ENCODE measurements at regions of chr17 and their contacts with region 1.

Region 1: DNA sequence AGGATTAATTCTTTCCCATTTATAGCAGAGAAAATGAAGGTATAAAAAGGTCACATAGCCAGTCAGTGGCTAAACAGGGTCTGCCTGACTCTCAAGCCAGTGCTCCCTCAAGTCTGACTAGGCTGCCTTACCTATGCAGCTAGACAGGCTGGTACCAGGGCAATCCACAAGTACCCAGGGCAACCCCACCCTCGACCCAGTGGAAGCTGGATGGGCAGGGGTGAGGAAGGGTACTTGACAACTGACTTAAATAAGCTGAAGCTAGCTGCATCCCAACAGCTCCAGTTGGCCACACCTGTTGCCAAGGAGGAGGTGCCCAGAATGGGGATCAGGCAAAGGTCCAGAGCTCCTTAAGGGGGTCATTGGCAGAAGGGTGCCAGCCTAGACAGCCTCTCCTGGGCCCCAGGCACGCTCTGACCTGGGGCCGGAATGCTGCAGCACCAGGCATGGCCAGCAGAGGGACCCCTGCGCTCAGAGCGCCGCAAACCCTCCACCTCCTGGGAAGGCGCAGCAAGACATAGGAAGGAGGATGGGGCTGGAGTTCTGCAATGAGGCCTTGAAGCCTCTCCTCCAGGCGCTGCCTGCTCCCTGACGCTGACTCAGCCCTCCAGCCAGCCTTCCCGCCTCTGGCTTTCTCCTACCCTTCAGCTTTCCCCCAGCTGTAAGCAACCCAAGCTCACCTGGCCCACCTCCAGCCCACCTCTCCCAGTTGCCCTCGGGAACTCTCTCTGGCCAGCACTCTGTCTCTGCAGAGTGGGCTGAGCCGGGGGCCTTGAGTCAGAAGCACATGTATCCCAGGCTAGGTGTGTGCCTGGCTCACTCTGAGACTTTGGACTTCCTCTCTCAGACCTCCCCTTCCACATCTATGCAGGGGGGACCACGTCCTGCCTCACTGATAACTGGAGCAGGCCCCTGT is 28.8 kb downstream of the MPP2 start:
- DNase-seq: peak; percentile 74
- H3K4me3 ChIP-seq: no peak overlapping the region
- H3K27ac ChIP-seq: no peak overlapping the region
- H3K27me3 ChIP-seq: peaks cover 18% of the 10 kb centered on the region
- CTCF ChIP-seq: peak; percentile 97

Region 2: DNA sequence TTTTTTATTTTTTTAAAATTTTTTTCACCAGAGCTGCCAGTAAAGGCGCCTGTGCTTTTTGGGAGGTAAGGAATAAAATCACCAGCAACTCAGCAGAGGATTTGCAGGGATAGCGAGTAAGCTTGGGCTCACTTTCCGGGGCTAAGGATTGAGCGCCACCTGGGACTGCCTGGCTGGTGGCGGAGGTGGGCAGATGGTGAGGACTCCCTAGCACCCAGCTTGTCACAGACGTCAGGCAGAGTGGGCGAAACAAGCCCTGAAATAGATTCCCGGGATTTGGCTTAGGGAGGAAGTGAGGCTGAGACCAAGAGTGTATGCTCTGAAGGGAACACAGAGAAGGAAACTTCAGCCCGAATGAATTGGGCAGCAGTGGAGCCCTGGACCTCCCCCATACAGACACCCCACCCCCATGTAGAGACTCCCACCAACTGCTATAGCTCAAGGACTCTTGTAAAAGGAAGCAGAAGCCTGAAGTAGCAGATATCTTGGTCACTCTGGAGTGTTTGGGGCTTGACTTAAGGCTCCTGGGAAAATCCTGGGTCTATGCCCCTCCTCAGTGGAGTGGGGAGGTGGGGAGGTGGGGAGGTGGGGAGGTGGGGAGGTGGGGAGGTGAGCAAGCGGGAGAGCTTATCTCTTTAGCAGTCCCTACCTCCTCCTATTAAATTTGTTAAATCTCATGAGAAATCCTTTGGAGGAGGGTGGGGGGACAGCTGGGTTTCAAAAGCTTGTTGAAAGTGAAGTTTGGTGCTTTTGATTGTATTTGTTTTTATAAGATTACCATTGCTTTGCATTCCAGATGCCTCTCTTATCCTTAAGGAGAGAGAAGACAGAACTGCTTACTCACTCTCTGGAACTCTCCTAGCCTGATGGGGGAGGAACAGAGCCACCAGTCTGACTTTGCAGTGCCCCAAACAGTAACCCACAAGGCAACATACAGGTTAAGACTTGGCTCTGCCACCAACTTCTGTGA is 471.6 kb before region 1 on chr17:
- CTCF ChIA-PET with region 1: no interaction called
- POLR2A ChIA-PET with region 1: no interaction called
- DNase-seq: peak; percentile 54
- H3K4me3 ChIP-seq: no peak overlapping the region
- H3K27ac ChIP-seq: peak overlapping the region; percentile 89
- H3K27me3 ChIP-seq: no peaks in the 10 kb centered on the region
- CTCF ChIP-seq: no peak

Region 3: DNA sequence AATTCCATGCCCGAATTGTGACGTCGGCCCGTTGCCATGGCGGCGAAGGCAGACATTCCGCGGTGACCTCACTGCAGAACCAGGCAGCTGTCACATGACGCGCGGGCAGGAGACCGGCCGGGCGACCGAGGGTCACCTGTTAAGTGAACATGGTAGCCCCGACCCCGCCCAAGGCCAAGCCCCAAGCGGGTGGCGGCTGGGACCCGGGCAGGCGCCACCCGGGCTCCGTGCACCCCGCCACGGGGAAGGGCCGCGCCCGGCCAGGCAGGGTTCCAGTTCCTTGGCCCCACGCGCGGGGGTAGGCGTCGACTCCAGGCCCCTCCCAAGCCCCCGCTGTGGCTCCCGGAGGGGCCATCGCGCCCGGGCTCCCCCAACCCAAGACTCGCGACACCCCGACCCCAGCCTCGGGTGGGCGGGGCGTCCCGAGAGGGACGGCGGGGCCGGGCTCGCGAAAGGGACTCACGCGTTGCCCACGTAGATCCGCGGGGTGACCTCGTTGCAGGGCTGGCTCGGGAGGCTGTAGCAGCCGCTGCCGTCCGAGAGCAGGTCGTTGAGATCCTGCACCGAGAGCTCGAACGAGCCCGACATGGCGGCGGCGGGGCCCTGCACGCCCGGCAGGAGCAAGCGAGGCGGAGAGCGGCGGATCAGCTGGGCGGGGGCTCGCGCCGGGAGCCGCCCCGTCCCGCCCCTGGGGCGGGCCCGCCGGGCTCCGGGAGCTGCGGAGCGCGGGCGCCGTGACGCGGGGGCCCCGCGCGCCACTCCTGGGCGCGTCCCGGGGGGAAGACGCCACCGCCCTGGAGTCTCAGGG is 100.0 kb before region 1 on chr17 and contains the start of gene DUSP3:
- CTCF ChIA-PET with region 1: no interaction called
- POLR2A ChIA-PET with region 1: no interaction called
- DNase-seq: peak; percentile 81
- H3K4me3 ChIP-seq: peak within 1 kb of the TSS; percentile 86
- H3K27ac ChIP-seq: peak within 1 kb of the TSS; percentile 89
- H3K27me3 ChIP-seq: no peaks in the 10 kb centered on the region
- CTCF ChIP-seq: no peak
- polyA plus RNA-seq, gene DUSP3: 45.3 and 45.9 TPM in 2 replicates

Region 4: GRCh38 chr17:43868226-43868994 is 10.1 kb before region 1 on chr17:
- CTCF ChIA-PET with region 1: interaction called, 49 read pairs
- POLR2A ChIA-PET with region 1: no interaction called
- DNase-seq: no peak
- H3K4me3 ChIP-seq: no peak overlapping the region
- H3K27ac ChIP-seq: no peak overlapping the region
- H3K27me3 ChIP-seq: peaks cover 62% of the 10 kb centered on the region
- CTCF ChIP-seq: no peak

Region 5: DNA sequence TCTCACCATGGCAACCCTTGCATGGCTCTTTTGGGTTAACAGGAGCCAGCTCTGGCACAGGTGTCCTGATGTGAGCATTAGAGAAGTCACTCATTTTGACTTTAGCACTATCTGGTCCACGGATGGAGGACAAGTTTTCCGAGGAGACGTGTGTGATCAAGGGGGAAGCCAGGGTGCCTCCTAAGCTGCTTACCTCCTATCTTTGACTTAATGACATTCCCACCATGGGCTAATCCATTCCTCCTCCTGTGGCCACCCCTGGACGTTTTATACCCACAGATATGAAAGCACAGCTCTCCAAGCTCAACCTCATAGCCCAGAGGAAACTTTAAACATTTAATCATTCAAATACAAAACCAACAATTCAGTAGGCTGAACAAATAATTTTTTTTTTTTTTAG is 10.0 kb after region 1 on chr17:
- CTCF ChIA-PET with region 1: interaction called, 17 read pairs
- POLR2A ChIA-PET with region 1: no interaction called
- DNase-seq: no peak
- H3K4me3 ChIP-seq: no peak overlapping the region
- H3K27ac ChIP-seq: no peak overlapping the region
- H3K27me3 ChIP-seq: peaks cover 18% of the 10 kb centered on the region
- CTCF ChIP-seq: no peak

Region 6: DNA sequence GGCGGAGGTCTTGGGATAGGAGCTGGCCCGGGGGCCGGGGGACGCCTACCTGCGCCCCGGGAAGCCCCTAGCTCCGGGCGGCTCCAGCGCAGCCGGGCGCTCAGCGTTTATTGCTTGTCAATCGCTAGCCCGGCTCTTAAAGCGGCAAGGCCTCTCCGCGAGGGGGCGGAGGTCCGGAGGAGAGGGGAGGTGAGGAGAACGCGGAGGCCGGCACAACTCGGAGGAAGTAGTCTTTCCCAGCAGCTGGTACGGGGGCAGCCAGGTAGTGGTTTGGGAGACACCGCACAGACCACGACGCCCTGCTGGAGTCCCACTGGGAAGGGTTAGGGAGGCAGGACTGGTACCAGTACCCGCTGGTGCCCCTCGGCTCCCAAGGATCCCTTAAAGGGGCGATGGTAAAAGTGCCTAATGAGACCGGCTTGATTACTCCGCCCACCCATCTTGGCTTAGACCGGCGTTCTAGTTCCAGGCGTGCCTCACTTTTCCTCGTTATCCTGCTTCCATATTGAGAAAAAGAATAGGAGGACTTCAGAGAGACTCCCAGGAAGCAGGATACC is 29.0 kb after region 1 on chr17 and contains the start of gene MPP2:
- CTCF ChIA-PET with region 1: interaction called, 17 read pairs
- POLR2A ChIA-PET with region 1: no interaction called
- DNase-seq: peak; percentile 26
- H3K4me3 ChIP-seq: peak within 1 kb of the TSS; percentile 68
- H3K27ac ChIP-seq: peak within 1 kb of the TSS; percentile 21
- H3K27me3 ChIP-seq: peaks cover 42% of the 10 kb centered on the region
- CTCF ChIP-seq: peak; percentile 30
- polyA plus RNA-seq, gene MPP2: 2.4 and 2.5 TPM in 2 replicates

Region 7: GRCh38 chr17:43994272-43995149 is 116.0 kb after region 1 on chr17:
- CTCF ChIA-PET with region 1: interaction called, 24 read pairs
- POLR2A ChIA-PET with region 1: no interaction called
- DNase-seq: no peak
- H3K4me3 ChIP-seq: peak overlapping the region; percentile 46
- H3K27ac ChIP-seq: no peak overlapping the region
- H3K27me3 ChIP-seq: peaks cover 13% of the 10 kb centered on the region
- CTCF ChIP-seq: peak; percentile 87

Region 8: GRCh38 chr17:44044067-44044466 is 165.5 kb after region 1 on chr17:
- CTCF ChIA-PET with region 1: interaction called, 12 read pairs
- POLR2A ChIA-PET with region 1: no interaction called
- DNase-seq: no peak
- H3K4me3 ChIP-seq: no peak overlapping the region
- H3K27ac ChIP-seq: peak overlapping the region; percentile 80
- H3K27me3 ChIP-seq: no peaks in the 10 kb centered on the region
- CTCF ChIP-seq: no peak

Region 9: GRCh38 chr17:44095642-44096496 is 217.4 kb after region 1 on chr17:
- CTCF ChIA-PET with region 1: interaction called, 12 read pairs
- POLR2A ChIA-PET with region 1: no interaction called
- DNase-seq: peak; percentile 79
- H3K4me3 ChIP-seq: peak overlapping the region; percentile 54
- H3K27ac ChIP-seq: peak overlapping the region; percentile 96
- H3K27me3 ChIP-seq: no peaks in the 10 kb centered on the region
- CTCF ChIP-seq: peak; percentile 45